Uterus (tissue), 4 donors: ENCODE measurements at regions of chr11 and their contacts with region 1.

Region 1: DNA sequence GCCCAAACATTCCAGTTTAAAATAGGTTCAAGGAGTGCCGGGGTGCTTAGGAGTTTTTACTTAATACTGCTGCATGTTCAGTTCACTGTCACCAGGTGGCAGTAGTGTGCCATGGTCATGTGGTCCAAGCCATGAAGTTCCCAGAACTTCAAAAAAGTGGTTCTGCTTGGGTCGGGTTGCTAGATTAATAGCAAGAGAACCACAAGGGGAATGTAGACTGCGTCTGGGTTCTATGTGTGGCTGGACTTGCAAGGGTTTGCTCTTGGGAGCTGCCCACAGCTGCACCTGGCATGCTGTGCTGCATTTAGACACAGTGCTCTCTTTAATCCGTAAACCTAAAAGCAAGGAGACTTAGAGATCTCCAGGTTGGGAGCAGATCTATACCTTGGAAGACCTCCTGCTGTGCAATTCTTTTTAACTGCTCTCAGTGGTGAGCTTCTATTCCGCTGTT is 6.5 kb upstream of the SPON1 start:
- DNase-seq: peak; percentile 56 to 71
- H3K4me3 ChIP-seq: no peak overlapping the region
- H3K27ac ChIP-seq: no peak overlapping the region
- H3K4me1 ChIP-seq: no peaks in the 10 kb centered on the region
- H3K27me3 ChIP-seq: no peaks in the 10 kb centered on the region
- CTCF ChIP-seq: peak; percentile 78 to 89 (median 82)
- POLR2A ChIP-seq: no peak

Region 2: DNA sequence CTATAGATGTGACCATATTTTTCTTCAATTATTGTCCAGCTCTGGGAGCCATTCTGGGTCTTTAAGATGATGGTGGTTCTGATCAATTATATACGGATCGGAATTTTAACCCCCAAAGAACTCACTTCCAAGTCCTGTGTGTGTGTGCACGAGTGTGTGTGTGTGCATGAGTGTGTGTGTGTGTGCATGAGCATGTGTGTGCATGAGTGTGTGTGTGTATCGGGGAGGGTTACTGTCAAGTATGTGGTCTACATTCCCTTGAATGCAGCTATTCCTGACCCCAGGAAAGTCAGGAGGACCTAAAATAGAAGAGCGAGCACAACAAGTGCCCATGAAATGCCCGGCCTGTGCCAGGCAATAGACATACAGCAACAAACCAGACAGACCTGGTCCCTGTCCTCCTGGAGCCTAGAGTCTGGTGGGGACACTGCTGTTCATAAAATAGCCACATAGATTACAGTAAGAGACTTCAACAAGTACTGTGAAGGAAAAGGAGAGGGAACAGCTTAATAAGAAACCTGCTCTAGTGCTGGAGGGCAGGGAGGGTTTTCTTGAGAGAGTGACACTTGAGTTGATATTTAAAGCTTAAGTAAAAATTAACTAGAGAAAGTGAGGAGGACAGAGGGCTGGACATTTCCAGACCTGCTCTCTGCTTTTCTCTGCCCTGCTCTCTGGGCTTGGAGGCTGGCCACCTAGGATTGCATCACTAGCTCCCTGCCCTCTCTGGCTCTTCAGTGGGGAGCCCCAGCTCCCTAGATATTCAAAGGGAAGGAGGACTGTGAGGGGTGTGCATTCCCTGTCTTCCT is 59.6 kb before region 1 on chr11:
- intact Hi-C with region 1: no loop called
- DNase-seq: no peak
- H3K4me3 ChIP-seq: no peak overlapping the region
- H3K27ac ChIP-seq: no peak overlapping the region
- H3K4me1 ChIP-seq: no peaks in the 10 kb centered on the region
- H3K27me3 ChIP-seq: no peaks in the 10 kb centered on the region
- CTCF ChIP-seq: no peak
- POLR2A ChIP-seq: no peak

Region 3: GRCh38 chr11:14249121-14249963 is 293.3 kb after region 1 on chr11:
- intact Hi-C with region 1: loop called (anchors 5 kb)
- DNase-seq: peak; percentile 55 to 58
- H3K4me3 ChIP-seq: no peak overlapping the region
- H3K27ac ChIP-seq: no peak overlapping the region
- H3K4me1 ChIP-seq: no peaks in the 10 kb centered on the region
- H3K27me3 ChIP-seq: no peaks in the 10 kb centered on the region
- CTCF ChIP-seq: peak; percentile 83 to 89 (median 86)
- POLR2A ChIP-seq: no peak